ENCODE measurements at regions of chr2 and their contacts with region 1.

Region 1: GRCh38 chr2:96927405-96928243 is 57.7 kb upstream of the SEMA4C start:
- DNase-seq: no peak
- H3K4me3 ChIP-seq: no peak overlapping the region
- H3K27ac ChIP-seq: no peak overlapping the region
- H3K4me1 ChIP-seq: peaks cover 0 to 3% (median 0%) of the 10 kb centered on the region in 4 experiments; a peak in 2 of 7 replicates
- H3K27me3 ChIP-seq: peaks cover 0 to 3% (median 1%) of the 10 kb centered on the region in 4 experiments; a peak in 1 of 7 replicates
- CTCF ChIP-seq: peak; percentile 16 to 20 (median 20); a peak in 2 of 4 replicates
- EP300 ChIP-seq: no peak
- POLR2A ChIP-seq: no peak
- RAD21 ChIP-seq: peak in 1 of 2 experiments; percentile 30; a peak in 1 of 4 replicates

Region 2: DNA sequence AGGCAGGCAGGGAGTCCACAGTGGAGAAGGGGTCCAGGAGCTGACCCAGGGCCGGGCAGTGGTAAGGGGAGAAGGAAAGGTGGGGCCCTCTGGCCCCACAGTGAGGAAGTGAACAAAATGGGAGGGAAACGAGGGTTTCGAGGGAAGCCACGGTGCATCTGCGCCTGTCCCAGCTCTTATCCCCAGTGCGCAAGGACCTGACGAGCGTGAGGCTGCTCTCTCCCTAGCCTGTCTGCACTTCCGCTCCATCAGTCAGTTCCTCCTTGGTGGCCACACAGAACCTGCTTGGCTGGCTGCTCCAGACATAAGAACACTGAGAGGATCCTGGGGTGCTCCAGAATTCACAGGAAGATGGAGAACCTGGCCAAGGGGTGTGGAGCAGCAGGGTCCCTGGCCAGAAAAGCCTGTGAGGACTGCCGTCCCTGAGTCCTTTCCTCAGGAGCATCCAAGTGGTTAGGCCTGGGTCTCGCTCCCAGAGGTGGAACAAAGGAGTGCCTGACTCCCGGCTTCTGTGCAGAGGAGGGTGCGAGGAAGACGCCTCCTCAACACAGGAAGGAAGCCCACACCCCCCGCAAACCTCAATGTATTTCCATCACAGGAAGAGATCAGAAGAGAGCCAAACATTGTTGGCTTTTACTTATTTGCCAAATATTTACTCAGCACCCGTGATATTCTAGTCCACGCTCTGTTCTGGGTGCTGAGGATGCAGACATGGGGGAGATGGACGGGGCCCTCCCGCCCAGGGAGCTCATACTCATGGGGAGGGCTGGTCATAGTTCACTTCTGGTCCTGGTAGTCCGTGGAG is 14.0 kb before region 1 on chr2:
- CTCF ChIA-PET with region 1: interaction called, 10 read pairs
- POLR2A ChIA-PET with region 1: interaction called, 3 read pairs
- DNase-seq: no peak
- H3K4me3 ChIP-seq: no peak overlapping the region
- H3K27ac ChIP-seq: no peak overlapping the region
- H3K4me1 ChIP-seq: peaks cover 0 to 16% (median 10%) of the 10 kb centered on the region in 4 experiments; a peak in 5 of 7 replicates
- H3K27me3 ChIP-seq: peaks cover 0 to 2% (median 0%) of the 10 kb centered on the region in 4 experiments; a peak in 2 of 7 replicates
- CTCF ChIP-seq: no peak
- EP300 ChIP-seq: no peak
- POLR2A ChIP-seq: no peak
- RAD21 ChIP-seq: no peak

Region 3: GRCh38 chr2:96940001-96940615 is 12.5 kb after region 1 on chr2:
- CTCF ChIA-PET with region 1: interaction called, 11 read pairs
- POLR2A ChIA-PET with region 1: interaction called, 3 read pairs
- DNase-seq: no peak
- H3K4me3 ChIP-seq: no peak overlapping the region
- H3K27ac ChIP-seq: no peak overlapping the region
- H3K4me1 ChIP-seq: peaks cover 0 to 3% (median 1%) of the 10 kb centered on the region in 4 experiments; a peak in 2 of 7 replicates
- H3K27me3 ChIP-seq: no peaks in the 10 kb centered on the region
- CTCF ChIP-seq: no peak
- EP300 ChIP-seq: no peak
- POLR2A ChIP-seq: no peak
- RAD21 ChIP-seq: no peak